ENCODE measurements at regions of chr22 and their contacts with region 1.

Region 1: DNA sequence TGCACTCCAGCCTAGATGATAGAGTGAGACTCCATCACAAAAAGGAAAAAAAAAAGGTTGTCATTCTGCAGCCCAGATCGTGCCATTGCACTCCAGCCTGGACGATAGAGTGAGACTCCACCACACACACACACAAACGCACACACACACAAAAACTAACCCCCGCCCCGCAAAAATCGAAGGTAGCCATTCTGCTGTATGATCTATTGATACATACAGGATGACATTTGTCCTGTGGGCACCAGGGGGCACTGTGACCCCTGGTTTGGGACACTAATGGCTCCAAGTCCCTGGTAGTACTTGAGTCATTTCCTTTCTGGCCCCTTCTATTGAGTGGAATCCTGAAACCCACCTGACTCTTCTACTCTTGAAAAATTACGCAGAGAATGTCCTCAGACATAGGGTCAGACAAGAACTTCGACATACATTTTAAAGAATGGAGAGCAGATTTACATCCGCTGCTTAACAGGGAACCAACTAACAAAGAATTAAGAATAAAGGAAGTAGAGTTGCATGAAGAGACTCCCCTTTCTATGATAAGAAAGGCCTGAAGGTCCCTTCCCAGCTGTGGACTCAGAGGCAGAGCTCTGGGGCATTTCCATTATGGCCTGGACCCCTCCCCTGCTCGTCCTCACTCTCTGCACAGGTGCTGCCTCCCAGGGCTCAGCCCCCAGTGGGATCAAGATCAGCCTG is 35.0 kb upstream of the PRAME start:
- DNase-seq: peak; percentile 75
- CTCF ChIP-seq: peak; percentile 82

Region 2: GRCh38 chr22:22487869-22488597 is 106.1 kb before region 1 on chr22:
- CTCF ChIA-PET with region 1: no interaction called
- POLR2A ChIA-PET with region 1: no interaction called
- DNase-seq: no peak
- CTCF ChIP-seq: no peak

Region 3: DNA sequence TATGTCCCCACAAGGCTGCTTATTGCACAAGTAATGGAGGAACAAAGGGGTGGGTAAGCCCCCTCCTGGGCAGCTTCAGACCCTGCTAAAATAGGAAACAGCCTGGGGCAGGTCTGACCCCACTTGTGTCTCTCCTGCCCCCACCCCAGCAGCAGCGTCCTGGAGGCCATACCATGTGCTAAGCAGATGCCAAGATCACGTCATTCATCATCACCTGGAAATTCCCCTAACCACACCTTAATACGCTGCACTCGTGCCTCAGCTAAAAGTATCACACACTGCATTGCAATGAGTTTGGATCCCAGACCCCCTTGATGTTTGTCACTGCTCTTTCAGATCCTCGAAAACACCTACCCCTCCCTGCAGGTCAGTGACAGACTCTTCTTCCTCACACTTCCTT is 22.5 kb after region 1 on chr22:
- CTCF ChIA-PET with region 1: interaction called, 44 read pairs
- POLR2A ChIA-PET with region 1: no interaction called
- DNase-seq: peak; percentile 55
- CTCF ChIP-seq: no peak